Colonic mucosa (tissue), 4 donors: ENCODE measurements at regions of chr4 and their contacts with region 1.

Region 1: GRCh38 chr4:102439236-102439614 is 61.9 kb upstream of the NFKB1 start:
- DNase-seq: peak; percentile 27
- H3K4me3 ChIP-seq: no peak overlapping the region
- H3K27ac ChIP-seq: no peak overlapping the region
- H3K4me1 ChIP-seq: no peaks in the 10 kb centered on the region
- H3K27me3 ChIP-seq: no peaks in the 10 kb centered on the region
- CTCF ChIP-seq: no peak

Region 2: GRCh38 chr4:102255454-102255853 is 183.8 kb before region 1 on chr4:
- intact Hi-C with region 1: loop called (anchors 10 kb)
- DNase-seq: no peak
- H3K4me3 ChIP-seq: no peak overlapping the region
- H3K27ac ChIP-seq: no peak overlapping the region
- H3K4me1 ChIP-seq: no peaks in the 10 kb centered on the region
- H3K27me3 ChIP-seq: no peaks in the 10 kb centered on the region
- CTCF ChIP-seq: no peak

Region 3: GRCh38 chr4:102826890-102827673 is 387.9 kb after region 1 on chr4 and contains the start of gene UBE2D3:
- intact Hi-C with region 1: loop called (anchors 10 kb)
- DNase-seq: peak; percentile 90
- H3K4me3 ChIP-seq: peak within 1 kb of the TSS; percentile 82
- H3K27ac ChIP-seq: peak within 1 kb of the TSS; percentile 100
- H3K4me1 ChIP-seq: peaks cover 5% of the 10 kb centered on the region
- H3K27me3 ChIP-seq: no peaks in the 10 kb centered on the region
- CTCF ChIP-seq: no peak
- total RNA-seq, gene UBE2D3: 290 to 346 TPM